ENCODE measurements at regions of chr10 and their contacts with region 1.

Region 1: GRCh38 chr10:129039406-129040370 is 427.4 kb upstream of the MGMT start:
- DNase-seq: no peak
- H3K4me3 ChIP-seq: no peak overlapping the region
- H3K27ac ChIP-seq: no peak overlapping the region
- H3K27me3 ChIP-seq: no peaks in the 10 kb centered on the region
- CTCF ChIP-seq: no peak

Region 2: GRCh38 chr10:129293991-129294700 is 254.5 kb after region 1 on chr10:
- CTCF ChIA-PET with region 1: no interaction called
- POLR2A ChIA-PET with region 1: interaction called, 11 read pairs
- DNase-seq: no peak
- H3K4me3 ChIP-seq: no peak overlapping the region
- H3K27ac ChIP-seq: no peak overlapping the region
- H3K27me3 ChIP-seq: no peaks in the 10 kb centered on the region
- CTCF ChIP-seq: no peak